WTC11 (cell line): ENCODE measurements at regions of chr1 and their contacts with region 1.

Region 1: GRCh38 chr1:32215629-32216480 is 6.3 kb downstream of the TMEM234 start:
- DNase-seq: peak; percentile 78
- ATAC-seq: peak; percentile 97
- H3K4me3 Mint-ChIP-seq: no peak overlapping the region
- H3K27ac Mint-ChIP-seq: no peak overlapping the region
- H3K4me1 Mint-ChIP-seq: peaks cover 2% of the 10 kb centered on the region; the same call in 1 of the 2 replicates
- H3K27me3 Mint-ChIP-seq: peaks cover 4% of the 10 kb centered on the region; the same call in 1 of the 2 replicates
- CTCF ChIP-seq: peak; percentile 62; the same call in 1 of the 2 replicates

Region 2: DNA sequence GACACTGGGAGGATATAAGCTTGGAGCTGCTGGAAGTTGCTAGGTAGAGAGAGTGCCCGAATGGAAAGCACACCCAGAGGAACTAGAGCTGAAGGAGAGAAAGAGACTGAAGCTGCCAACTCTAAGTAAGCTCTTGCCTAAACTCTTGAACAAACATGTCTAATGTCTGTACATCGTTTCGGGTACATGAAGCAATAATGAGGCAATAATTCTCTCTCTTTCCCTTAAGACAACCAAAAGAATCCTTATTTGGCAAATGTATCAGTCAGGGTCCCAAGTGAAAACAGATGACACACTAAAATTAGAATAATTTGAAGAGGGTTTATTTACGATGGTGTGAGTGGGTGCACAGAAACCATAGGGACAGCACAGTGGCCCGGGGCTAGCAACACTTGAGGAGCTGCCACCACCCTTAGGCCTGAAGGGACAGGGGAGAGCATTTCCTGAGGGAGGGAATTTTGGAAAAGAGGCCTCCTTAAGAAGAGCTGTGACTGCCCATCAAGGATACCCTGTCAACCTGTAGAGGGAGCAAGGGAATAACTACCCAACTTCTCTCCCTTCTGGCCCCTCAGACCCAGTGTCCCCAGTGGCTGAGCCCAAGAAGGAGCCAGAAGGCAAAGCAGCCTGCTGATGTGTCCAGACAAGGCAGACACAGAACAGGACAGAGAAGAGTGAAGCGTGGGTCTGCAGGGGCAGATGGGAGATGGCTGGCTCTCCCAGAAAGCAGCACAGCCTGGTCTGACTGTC is 238.3 kb before region 1 on chr1:
- CTCF ChIA-PET with region 1: no interaction called
- POLR2A ChIA-PET with region 1: no interaction called
- DNase-seq: peak; percentile 67
- ATAC-seq: peak; percentile 98
- H3K4me3 Mint-ChIP-seq: no peak overlapping the region
- H3K27ac Mint-ChIP-seq: peak overlapping the region; percentile 90
- H3K4me1 Mint-ChIP-seq: peaks cover 16% of the 10 kb centered on the region
- H3K27me3 Mint-ChIP-seq: no peaks in the 10 kb centered on the region
- CTCF ChIP-seq: peak; percentile 21; the same call in 1 of the 2 replicates

Region 3: DNA sequence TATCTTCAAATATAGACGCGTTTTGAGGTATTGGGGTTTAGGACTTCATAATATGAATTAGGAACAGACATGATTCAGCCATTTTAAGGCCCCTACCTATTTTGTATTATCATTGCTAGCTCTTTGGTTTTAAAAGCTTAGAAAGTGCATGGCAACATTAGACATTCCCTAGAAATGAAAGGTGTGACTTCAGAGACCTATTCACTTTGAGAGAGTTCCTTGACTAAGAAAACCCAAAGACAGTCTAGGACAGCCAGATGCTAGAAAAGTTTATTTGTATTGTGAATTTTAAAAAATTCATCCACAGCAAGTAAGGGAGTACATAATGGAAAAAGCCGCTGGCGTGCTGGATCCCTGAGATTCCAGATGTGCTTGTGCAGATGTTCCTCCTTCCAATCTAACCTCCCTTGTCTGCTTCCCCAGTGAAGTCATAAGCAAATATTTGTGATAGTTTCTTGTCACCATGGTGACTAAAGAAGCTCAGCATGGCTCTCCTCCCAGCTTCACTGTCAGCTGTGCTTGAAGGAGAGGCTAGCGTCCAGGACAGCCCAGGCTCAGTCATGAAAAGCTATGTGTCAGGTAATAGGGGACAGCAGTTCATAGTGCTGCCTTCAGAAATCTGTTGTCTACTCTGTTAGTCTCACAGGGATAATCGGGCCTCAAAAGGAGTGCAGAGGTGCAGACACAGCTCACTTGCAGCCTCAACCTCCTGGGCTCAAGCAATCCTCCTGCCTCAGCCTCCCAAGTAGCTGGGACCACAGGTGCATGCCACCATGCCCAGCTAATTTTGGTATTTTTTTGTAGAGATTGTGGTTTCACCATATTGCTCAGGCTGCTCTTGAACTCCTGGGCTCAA is 73.2 kb before region 1 on chr1:
- CTCF ChIA-PET with region 1: no interaction called
- POLR2A ChIA-PET with region 1: no interaction called
- DNase-seq: no peak
- ATAC-seq: peak; percentile 30; the same call in 1 of the 2 replicates
- H3K4me3 Mint-ChIP-seq: no peak overlapping the region
- H3K27ac Mint-ChIP-seq: no peak overlapping the region
- H3K4me1 Mint-ChIP-seq: no peaks in the 10 kb centered on the region
- H3K27me3 Mint-ChIP-seq: no peaks in the 10 kb centered on the region
- CTCF ChIP-seq: no peak

Region 4: DNA sequence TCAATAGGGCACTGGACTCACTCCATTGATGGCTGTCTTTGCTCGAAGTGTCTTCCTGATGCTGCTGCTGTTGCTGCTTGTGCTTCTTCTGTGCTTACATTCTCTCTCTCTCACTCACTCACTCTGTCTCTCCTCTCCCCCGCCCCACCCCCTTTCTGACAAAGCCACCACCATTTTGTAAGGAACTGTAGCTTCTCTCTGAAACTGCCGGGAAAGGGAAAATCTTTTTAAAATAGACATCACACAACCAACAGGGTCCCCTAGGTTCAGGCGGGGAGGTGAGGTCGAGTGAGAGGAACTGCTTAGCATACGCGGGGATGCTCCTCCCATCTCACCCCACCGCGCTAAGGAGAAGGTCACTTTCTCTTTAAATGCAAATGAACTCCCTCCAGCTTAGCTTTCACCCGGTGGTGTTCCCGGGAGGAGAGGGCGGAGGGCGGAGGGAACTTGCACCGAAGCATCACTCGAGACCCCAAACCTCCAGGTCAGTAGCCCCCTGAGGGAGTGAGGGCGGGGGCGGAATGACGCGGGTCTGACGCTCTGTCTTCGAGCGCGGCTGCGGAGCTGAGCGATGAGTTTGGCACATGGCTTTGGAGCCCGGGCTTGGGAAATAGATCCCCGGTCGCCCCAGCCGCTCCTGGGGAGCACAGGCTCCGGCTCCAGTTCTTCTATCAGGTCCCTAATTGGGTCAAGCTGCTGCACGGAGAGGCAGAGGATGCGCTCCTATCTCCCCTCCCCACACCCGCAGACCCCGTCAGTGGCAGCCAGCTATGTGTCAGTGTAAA is 15.4 kb before region 1 on chr1 and contains the start of gene CCDC28B:
- CTCF ChIA-PET with region 1: interaction called, 27 read pairs
- POLR2A ChIA-PET with region 1: interaction called, 8 read pairs
- DNase-seq: peak; percentile 71
- ATAC-seq: peak; percentile 71
- H3K4me3 Mint-ChIP-seq: peak within 1 kb of the TSS; percentile 84
- H3K27ac Mint-ChIP-seq: peak within 1 kb of the TSS; percentile 69
- H3K4me1 Mint-ChIP-seq: peaks cover 40% of the 10 kb centered on the region
- H3K27me3 Mint-ChIP-seq: peaks cover 8% of the 10 kb centered on the region
- CTCF ChIP-seq: no peak
- total RNA-seq, gene CCDC28B: 29.0 to 34.4 TPM (median 29.9 TPM) in 3 replicates

Region 5: DNA sequence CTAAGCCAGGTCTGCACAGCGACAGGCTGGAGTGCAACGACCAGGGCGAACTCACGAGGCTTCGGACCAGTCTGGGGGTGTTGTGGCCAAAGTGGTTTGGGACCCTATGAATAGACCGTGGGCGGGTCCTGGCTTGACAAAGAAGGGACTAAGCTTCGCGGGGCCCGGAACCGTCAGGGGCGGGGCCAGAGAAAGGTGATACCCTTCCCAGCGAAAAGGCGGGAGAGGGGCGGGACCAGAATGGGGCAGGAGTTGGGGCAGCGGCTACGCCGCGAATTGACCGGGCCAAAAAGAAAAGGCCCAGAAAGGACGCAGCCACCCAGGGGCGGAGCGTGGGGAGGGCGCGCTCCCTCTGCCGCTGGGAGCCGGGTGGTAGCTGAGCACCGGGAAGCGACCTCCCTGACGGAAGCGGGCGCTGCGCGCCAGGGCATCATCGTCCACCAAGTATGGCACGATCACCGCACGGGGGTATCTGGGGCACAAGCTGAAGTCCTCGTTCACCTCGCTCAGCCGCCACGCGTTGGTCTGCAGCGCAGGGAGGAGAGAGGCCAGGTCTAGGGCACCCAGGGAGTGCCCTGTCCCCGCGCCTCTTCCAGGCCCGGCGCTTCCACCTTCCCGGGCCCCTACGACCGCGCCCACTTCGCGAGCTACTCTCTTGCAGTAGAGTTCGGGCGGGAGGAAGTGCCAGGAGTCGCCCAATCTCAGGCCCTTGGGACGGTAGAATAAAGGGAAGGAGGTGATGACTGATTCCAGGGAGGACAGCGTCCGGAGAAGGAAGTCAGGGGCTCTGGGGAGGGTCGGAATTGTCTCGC is 24.5 kb after region 1 on chr1:
- CTCF ChIA-PET with region 1: interaction called, 45 read pairs
- POLR2A ChIA-PET with region 1: interaction called, 6 read pairs
- DNase-seq: peak; percentile 98
- ATAC-seq: peak; percentile 84
- H3K4me3 Mint-ChIP-seq: peak overlapping the region; percentile 84
- H3K27ac Mint-ChIP-seq: peak overlapping the region; percentile 78
- H3K4me1 Mint-ChIP-seq: peaks cover 21% of the 10 kb centered on the region
- H3K27me3 Mint-ChIP-seq: peaks cover 3% of the 10 kb centered on the region; the same call in 1 of the 2 replicates
- CTCF ChIP-seq: no peak

Region 6: DNA sequence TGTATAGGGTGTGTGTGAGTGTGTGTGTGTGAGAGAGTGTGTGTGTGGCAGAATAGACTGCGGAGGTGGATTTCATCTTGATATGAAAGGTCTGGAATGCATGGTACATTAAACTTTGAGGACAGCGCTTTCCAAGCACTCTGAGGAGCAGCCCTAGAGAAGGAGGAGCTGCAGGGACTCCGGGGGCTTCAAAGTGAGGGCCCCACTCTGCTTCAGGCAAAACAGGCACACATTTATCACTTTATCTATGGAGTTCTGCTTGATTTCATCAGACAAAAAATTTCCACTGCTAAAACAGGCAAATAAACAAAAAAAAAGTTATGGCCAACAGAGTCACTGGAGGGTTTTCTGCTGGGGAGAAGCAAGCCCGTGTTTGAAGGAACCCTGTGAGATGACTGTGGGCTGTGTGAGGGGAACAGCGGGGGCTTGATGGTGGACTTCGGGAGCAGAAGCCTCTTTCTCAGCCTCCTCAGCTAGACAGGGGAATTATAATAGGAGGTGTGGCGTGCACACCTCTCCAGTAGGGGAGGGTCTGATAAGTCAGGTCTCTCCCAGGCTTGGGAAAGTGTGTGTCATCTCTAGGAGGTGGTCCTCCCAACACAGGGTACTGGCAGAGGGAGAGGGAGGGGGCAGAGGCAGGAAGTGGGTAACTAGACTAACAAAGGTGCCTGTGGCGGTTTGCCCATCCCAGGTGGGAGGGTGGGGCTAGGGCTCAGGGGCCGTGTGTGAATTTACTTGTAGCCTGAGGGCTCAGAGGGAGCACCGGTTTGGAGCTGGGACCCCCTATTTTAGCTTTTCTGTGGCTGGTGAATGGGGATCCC is 57.7 kb after region 1 on chr1:
- CTCF ChIA-PET with region 1: interaction called, 17 read pairs
- POLR2A ChIA-PET with region 1: no interaction called
- DNase-seq: peak; percentile 79
- ATAC-seq: peak; percentile 95
- H3K4me3 Mint-ChIP-seq: peak overlapping the region; percentile 67
- H3K27ac Mint-ChIP-seq: peak overlapping the region; percentile 94
- H3K4me1 Mint-ChIP-seq: peaks cover 38% of the 10 kb centered on the region
- H3K27me3 Mint-ChIP-seq: no peaks in the 10 kb centered on the region
- CTCF ChIP-seq: no peak

Region 7: DNA sequence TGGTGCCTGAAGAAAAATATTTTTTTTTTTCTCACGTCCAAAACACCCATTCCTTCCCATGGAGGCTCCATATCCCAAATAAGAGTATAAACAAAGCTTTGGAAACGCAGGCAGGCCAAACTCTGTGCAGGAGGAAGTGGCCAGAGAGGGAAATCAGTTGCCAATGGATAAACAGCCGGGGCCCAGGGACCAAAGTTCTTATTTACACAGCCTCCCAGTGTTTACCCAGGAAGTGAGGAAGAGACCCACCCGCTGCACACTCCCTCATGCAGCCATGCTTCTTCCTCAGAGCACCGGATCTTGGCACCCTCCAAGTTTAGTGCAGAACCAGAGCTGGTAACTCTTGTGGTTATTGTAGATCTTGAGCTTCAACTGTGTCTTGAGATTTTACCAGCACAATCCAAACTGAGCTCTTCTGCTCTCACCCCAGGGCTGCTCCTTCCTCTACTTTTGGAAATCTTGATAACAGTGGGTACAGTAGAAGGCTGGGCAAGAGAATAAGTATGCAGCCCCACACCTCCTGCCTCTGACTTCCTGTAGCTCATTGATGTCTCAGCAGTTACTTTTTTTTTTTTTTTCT is 105.9 kb after region 1 on chr1:
- CTCF ChIA-PET with region 1: interaction called, 36 read pairs
- POLR2A ChIA-PET with region 1: no interaction called
- DNase-seq: no peak
- ATAC-seq: no peak
- H3K4me3 Mint-ChIP-seq: no peak overlapping the region
- H3K27ac Mint-ChIP-seq: peak overlapping the region; percentile 36; the same call in 1 of the 2 replicates
- H3K4me1 Mint-ChIP-seq: 0 out of 2 replicates have a peak, but pooled peaks cover 3% of the 10 kb centered on the region
- H3K27me3 Mint-ChIP-seq: no peaks in the 10 kb centered on the region
- CTCF ChIP-seq: no peak

Region 8: DNA sequence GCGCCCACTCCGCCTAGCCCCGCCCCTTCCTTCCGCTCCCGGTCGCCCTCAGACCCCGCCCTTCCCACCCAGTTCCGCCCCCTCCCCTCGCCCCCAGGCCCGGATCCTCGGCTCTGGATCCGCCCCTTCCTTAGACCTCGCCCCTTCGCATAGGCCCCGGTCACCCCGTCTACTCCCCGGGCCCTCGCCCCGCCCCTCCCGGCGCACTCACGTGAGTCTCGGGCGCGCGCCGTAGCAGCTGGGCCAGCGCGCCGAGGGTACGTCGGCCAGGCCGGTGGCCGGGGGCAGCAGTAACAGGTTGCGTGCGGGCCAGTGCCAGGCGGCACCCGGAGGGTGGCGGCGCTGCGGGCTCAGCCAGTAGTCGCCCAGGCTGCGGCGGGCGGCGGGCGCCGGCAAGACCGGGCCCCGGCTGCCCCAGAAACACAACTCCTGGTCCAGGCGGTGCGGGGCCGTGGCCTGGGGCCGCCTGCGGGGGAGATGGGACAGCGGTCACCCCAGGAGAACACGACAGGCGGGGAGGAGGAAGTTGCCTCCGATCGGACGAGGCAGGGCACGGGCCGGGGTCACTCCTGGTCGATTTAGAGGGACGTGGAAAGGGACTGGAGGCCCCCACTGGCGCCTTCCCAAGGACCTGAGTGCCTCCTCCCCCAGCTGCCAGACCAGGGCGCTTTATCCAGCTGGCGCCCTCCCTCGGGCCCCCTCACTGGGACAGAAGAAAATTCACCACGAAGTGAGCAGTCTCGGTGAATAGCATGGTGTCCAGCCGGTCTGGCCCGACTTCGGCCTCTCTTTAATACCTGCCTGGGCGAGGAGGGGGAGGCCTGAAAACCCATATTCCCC is 135.8 kb after region 1 on chr1:
- CTCF ChIA-PET with region 1: interaction called, 10 read pairs
- POLR2A ChIA-PET with region 1: no interaction called
- DNase-seq: peak; percentile 96
- ATAC-seq: peak; percentile 96
- H3K4me3 Mint-ChIP-seq: peak overlapping the region; percentile 80
- H3K27ac Mint-ChIP-seq: peak overlapping the region; percentile 84; the same call in 1 of the 2 replicates
- H3K4me1 Mint-ChIP-seq: peaks cover 18% of the 10 kb centered on the region
- H3K27me3 Mint-ChIP-seq: peaks cover 55% of the 10 kb centered on the region
- CTCF ChIP-seq: no peak